Endothelial cell of umbilical vein (primary cell): ENCODE measurements at regions of chr7 and their contacts with region 1.

Region 1: GRCh38 chr7:106153891-106154449 is 41.9 kb upstream of the SYPL1 start:
- DNase-seq: peak; percentile 80
- H3K4me3 ChIP-seq: no peak overlapping the region
- H3K27ac ChIP-seq: no peak overlapping the region
- H3K4me1 ChIP-seq: peaks cover 4% of the 10 kb centered on the region
- H3K27me3 ChIP-seq: peaks cover 31 to 33% of the 10 kb centered on the region in 2 experiments
- CTCF ChIP-seq: peak; percentile 91 to 92
- POLR2A ChIP-seq: no peak

Region 2: DNA sequence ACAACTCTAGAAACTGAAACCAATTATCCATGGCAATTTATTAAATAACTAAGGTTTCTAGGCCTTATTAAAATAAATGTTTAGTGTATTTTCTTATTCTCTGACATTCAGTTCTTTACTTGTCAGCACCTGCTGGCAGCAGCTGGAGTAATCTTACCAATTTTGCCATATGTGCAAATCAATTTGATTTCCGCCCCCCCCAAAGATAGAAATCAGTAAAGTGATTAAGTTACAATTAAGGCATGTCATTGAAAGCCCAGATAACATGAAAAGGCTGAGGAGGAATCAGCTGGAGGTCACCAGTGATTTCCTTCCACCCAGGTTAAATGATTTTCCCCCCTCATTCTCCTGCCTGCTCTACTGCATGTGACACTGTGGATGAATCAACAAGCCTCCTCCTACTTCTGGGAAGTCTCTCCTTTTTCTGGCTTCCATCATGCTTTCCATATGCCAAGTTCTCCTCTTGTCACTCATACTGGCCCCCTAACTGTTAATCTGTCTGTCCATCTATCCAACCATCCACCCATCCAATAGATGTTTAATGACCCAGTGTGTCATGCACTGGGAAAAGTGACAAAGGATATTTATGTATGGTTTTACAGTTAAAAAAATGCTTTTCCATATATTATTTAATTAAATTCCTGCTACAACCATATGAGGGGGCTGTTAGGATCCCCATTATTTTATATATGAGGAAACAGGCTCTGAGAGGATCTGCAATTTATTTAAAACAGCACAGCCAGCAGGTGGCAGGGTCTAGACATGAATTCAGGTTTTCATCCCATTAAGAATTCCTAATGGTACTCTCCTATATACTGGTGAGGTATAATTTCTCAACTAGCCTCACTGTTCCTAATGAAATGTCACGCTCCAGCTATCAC is 394.1 kb before region 1 on chr7:
- CTCF ChIA-PET with region 1: interaction called, 3 read pairs
- POLR2A ChIA-PET with region 1: no interaction called
- dilution Hi-C with region 1: no loop called
- intact Hi-C with region 1: loop called (anchors 10 kb)
- DNase-seq: peak; percentile 64
- H3K4me3 ChIP-seq: no peak overlapping the region
- H3K27ac ChIP-seq: no peak overlapping the region
- H3K4me1 ChIP-seq: no peaks in the 10 kb centered on the region
- H3K27me3 ChIP-seq: no peaks in the 10 kb centered on the region
- CTCF ChIP-seq: peak; percentile 33 to 43
- POLR2A ChIP-seq: no peak

Region 3: GRCh38 chr7:106050011-106050745 is 103.8 kb before region 1 on chr7:
- CTCF ChIA-PET with region 1: interaction called, 209 read pairs
- POLR2A ChIA-PET with region 1: no interaction called
- dilution Hi-C with region 1: loop called (anchors 25 kb)
- intact Hi-C with region 1: no loop called
- DNase-seq: no peak
- H3K4me3 ChIP-seq: no peak overlapping the region
- H3K27ac ChIP-seq: no peak overlapping the region
- H3K4me1 ChIP-seq: no peaks in the 10 kb centered on the region
- H3K27me3 ChIP-seq: peaks cover 16 to 21% of the 10 kb centered on the region in 2 experiments
- CTCF ChIP-seq: no peak
- POLR2A ChIP-seq: no peak

Region 4: GRCh38 chr7:106064771-106065585 is 89.0 kb before region 1 on chr7:
- CTCF ChIA-PET with region 1: interaction called, 209 read pairs
- POLR2A ChIA-PET with region 1: no interaction called
- dilution Hi-C with region 1: loop called (anchors 25 kb)
- intact Hi-C with region 1: no loop called
- DNase-seq: peak; percentile 88
- H3K4me3 ChIP-seq: no peak overlapping the region
- H3K27ac ChIP-seq: no peak overlapping the region
- H3K4me1 ChIP-seq: peaks cover 17% of the 10 kb centered on the region
- H3K27me3 ChIP-seq: no peaks in the 10 kb centered on the region
- CTCF ChIP-seq: no peak
- POLR2A ChIP-seq: peak; percentile 21

Region 5: GRCh38 chr7:106112117-106112971 is 41.6 kb before region 1 on chr7 and contains the start of gene SYPL1:
- CTCF ChIA-PET with region 1: interaction called, 14 read pairs
- POLR2A ChIA-PET with region 1: no interaction called
- dilution Hi-C with region 1: no loop called
- intact Hi-C with region 1: no loop called
- DNase-seq: peak; percentile 87
- H3K4me3 ChIP-seq: peak within 1 kb of the TSS; percentile 81 to 97 (median 88)
- H3K27ac ChIP-seq: peak within 1 kb of the TSS; percentile 79
- H3K4me1 ChIP-seq: peaks cover 12% of the 10 kb centered on the region
- H3K27me3 ChIP-seq: no peaks in the 10 kb centered on the region
- CTCF ChIP-seq: no peak
- POLR2A ChIP-seq: peak; percentile 87
- total RNA-seq, gene SYPL1: 66.6 and 67.1 TPM in 2 replicates

Region 6: GRCh38 chr7:106143711-106144337 is 10.1 kb before region 1 on chr7:
- CTCF ChIA-PET with region 1: interaction called, 20 read pairs
- POLR2A ChIA-PET with region 1: no interaction called
- dilution Hi-C with region 1: no loop called
- intact Hi-C with region 1: no loop called
- DNase-seq: no peak
- H3K4me3 ChIP-seq: no peak overlapping the region
- H3K27ac ChIP-seq: no peak overlapping the region
- H3K4me1 ChIP-seq: no peaks in the 10 kb centered on the region
- H3K27me3 ChIP-seq: peaks cover 25 to 27% of the 10 kb centered on the region in 2 experiments
- CTCF ChIP-seq: no peak
- POLR2A ChIP-seq: no peak